Ascending aorta (tissue), 2 donors: ENCODE measurements at regions of chr3 and their contacts with region 1.

Region 1: GRCh38 chr3:142910280-142910679 is 21.4 kb upstream of the PCOLCE2 start:
- DNase-seq: no peak
- H3K4me3 ChIP-seq: no peak overlapping the region
- H3K27ac ChIP-seq: peak overlapping the region; percentile 64 to 66
- H3K4me1 ChIP-seq: peaks cover 0 to 14% of the 10 kb centered on the region in 2 donors
- H3K27me3 ChIP-seq: no peaks in the 10 kb centered on the region
- CTCF ChIP-seq: no peak

Region 2: GRCh38 chr3:142888481-142889211 is 21.6 kb before region 1 on chr3 and contains the start of gene PCOLCE2:
- intact Hi-C with region 1: loop called (anchors 2 kb)
- DNase-seq: no peak
- H3K4me3 ChIP-seq: peak within 1 kb of the TSS; percentile 79 to 81
- H3K27ac ChIP-seq: peak within 1 kb of the TSS; percentile 64 to 69
- H3K4me1 ChIP-seq: peaks cover 0 to 6% of the 10 kb centered on the region in 2 donors
- H3K27me3 ChIP-seq: no peaks in the 10 kb centered on the region
- CTCF ChIP-seq: peak in 1 of 3 experiments; percentile 18
- total RNA-seq, gene PCOLCE2: 58.1 TPM

Region 3: DNA sequence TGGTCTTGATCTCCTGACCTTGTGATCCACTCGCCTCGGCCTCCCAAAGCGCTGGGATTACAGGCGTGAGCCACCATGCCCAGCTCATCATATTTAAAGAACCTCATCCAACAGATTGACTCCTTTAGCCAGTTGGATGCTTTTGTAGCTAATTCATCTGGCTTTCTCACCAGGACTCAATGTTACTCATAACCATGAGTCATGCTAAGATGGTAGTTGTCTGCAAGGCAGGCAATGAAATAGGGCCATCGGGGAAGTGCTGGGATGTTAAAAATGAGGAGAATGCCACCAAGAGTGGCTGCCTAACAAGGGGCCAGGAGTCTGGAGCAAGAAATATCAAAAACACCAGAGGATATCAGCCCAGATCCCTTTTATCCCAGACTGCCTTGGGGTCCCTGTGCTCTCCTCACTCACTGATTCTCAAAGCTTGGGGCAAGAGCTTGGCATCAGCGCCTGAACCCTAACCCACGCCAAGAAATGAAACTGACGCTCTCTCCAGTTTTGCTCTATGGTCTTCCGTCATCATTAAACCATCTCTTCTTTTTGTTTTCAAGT is 14.0 kb before region 1 on chr3:
- intact Hi-C with region 1: loop called (anchors 2 kb)
- DNase-seq: no peak
- H3K4me3 ChIP-seq: no peak overlapping the region
- H3K27ac ChIP-seq: peak overlapping the region in 1 of 2 donors; percentile 53
- H3K4me1 ChIP-seq: peaks cover 0 to 6% of the 10 kb centered on the region in 2 donors
- H3K27me3 ChIP-seq: no peaks in the 10 kb centered on the region
- CTCF ChIP-seq: no peak